ENCODE measurements at regions of chr13 and their contacts with region 1.

Region 1: DNA sequence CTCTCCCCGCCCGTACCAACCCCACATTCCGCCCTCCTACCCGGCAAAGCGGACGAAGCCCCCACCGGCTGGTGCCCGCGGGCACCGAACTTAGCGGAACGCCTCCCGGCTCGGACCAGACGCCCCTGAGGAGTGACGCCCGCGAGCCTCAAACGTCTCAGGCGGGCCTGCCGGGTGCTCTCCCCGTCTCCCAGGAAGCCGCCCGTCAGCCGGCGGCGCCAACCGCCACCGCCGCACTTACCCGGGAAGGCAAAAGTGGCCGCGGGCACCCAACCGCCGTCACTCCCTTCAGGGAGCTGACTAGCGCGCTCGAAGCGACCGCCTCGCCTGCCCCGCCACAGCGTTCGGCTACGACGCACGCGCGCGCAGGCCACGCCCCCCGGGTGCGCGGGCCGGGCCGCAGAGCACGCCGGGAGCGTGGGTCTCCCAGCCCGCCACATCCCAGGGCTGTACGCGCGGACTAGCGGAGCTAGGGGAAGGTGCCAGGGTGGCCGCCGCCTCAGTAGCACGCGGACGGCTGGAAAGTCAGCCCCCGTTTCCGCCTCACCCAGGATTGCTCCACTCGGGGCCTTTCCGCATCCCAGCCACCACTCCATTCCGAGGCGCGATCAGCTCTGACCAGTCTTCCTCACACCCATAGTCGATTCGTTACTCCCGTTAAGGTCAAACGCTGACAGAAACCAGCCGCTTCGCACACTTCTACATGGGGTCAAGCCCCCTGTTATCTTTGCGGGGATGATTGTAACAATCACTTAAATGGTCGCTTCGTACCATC is at the start of gene TEX30:
- DNase-seq: peak; percentile 85 to 94 (median 88)
- ATAC-seq: peak; percentile 94 to 100 (median 100)
- H3K4me3 ChIP-seq: peak within 1 kb of the TSS; percentile 51 to 87 (median 81)
- H3K27ac ChIP-seq: peak within 1 kb of the TSS; percentile 45 to 90 (median 82)
- H3K4me1 ChIP-seq: peaks cover 0 to 23% (median 7%) of the 10 kb centered on the region in 12 donors
- H3K27me3 ChIP-seq: no peaks in the 10 kb centered on the region
- CTCF ChIP-seq: peak in 2 of 12 donors; percentile 16 to 17
- POLR2A ChIP-seq: peak in 1 of 2 donors; percentile 90
- total RNA-seq, gene TEX30: 6.0 to 13.7 (median 9.8) TPM

Region 2: DNA sequence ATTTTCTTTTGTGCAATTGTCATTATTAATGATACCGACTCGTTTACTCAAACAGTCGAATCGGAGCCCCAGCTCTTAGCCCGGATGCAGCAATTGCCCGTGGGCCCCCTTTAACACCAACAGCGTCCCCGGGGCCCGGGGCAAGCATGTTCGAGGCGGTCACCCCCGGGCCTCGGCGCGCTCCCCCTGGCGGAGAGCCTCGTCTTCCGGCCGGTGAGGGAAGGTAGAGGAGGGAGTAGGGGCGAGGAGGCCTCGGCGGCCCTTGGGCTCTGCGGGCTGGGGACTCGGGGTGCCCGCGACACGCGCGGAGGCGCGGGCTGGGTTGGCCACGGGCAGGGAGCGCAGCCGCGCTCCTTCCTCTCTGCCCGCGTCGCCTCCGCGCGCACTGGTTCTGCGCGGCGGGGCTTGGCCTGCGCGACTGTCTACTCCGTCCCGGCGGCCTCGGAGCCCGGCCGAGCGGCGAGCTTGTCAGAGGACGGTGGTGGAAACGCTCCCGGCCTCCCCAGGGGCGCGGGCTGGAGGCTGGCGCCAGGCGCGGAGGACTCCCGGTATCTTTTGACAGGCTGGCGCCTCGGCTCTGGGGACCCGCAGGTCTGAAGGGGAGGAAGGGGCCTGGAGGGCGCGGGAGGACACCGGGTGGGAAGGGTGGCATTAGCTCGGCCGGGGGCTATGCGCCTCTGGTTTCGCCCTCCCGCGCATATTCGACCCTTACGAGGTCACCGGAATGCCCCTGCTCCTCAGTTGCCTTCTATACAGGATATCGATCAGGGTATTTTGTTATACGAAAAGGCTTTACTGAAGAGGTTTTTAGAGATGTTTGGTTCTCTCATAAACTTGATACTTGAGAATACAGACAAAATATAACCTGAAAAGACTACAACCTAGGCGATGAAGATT is 26.8 kb after region 1 on chr13:
- intact Hi-C with region 1: loop called in 1 of 10 experiments (anchors 2 kb)
- DNase-seq: peak; percentile 84 to 90 (median 87)
- ATAC-seq: peak; percentile 66 to 87 (median 82)
- H3K4me3 ChIP-seq: peak overlapping the region; percentile 65 to 95 (median 82)
- H3K27ac ChIP-seq: peak overlapping the region; percentile 72 to 96 (median 91)
- H3K4me1 ChIP-seq: peaks cover 0 to 47% (median 30%) of the 10 kb centered on the region in 12 donors
- H3K27me3 ChIP-seq: peaks cover 0 to 10% (median 0%) of the 10 kb centered on the region in 9 donors
- CTCF ChIP-seq: peak; percentile 70 to 89 (median 82)
- POLR2A ChIP-seq: peak in 1 of 2 donors; percentile 26